CD14-positive monocyte (primary cell): ENCODE measurements at regions of chr9 and their contacts with region 1.

Region 1: DNA sequence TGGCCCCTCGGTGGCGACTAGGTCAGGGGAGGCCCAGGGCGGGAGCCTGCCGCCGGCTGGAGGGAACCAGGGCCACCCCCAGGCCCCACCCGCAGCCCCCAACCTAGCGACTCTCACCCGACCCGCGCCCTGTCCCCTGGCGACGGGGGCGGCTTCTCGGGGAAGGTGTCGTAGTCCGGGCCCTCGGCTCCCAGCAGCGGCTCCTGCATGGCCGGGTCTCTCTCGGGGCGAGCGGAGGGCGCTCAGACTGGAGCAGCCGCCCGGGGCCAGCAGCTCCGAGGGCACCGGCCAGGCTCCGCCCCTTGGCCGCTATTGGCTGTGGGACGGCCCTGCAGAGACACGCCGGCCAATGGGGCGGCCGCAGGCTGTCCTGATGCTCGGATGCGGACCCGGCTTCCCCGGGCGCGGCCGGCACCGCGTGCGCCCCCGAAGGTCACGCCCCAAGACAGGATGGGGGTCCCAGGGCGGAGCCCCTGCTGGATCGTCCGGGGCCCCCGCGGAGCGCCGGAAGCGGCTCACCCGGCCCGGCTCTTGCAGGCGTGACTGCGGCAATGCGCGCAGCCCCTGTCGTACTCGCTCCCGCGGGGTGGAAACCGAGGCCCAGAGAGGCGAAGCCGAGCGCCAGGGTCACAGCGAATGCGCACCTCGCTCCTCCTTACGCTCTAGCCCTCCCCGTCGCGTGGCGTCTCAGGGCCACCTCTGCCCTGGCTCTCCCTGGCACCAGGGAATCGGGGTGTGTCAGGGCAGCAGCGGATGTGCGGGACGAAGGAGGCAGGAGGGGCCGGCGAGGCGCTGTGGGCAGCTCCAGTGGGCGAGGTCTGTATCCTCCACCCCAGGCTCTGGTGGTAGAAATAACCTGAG is at the start of gene SLC2A6:
- DNase-seq: peak; percentile 70 to 87 (median 86)
- H3K4me3 ChIP-seq: peak within 1 kb of the TSS; percentile 74 to 95 (median 90)
- H3K4me3 Mint-ChIP-seq: peak within 1 kb of the TSS; percentile 84 to 92
- H3K27ac ChIP-seq: peak within 1 kb of the TSS; percentile 90 to 93
- H3K27ac Mint-ChIP-seq: peak within 1 kb of the TSS; percentile 78 to 99 (median 95)
- H3K4me1 ChIP-seq: peaks cover 52 to 57% of the 10 kb centered on the region in 2 donors
- H3K4me1 Mint-ChIP-seq: peaks cover 44% of the 10 kb centered on the region
- H3K27me3 ChIP-seq: peaks cover 0 to 15% of the 10 kb centered on the region in 2 donors
- H3K27me3 Mint-ChIP-seq: peaks cover 27 to 40% (median 33%) of the 10 kb centered on the region in 3 donors
- CTCF ChIP-seq: no peak
- polyA plus RNA-seq, gene SLC2A6: 43.2 to 127 (median 60.4) TPM

Region 2: DNA sequence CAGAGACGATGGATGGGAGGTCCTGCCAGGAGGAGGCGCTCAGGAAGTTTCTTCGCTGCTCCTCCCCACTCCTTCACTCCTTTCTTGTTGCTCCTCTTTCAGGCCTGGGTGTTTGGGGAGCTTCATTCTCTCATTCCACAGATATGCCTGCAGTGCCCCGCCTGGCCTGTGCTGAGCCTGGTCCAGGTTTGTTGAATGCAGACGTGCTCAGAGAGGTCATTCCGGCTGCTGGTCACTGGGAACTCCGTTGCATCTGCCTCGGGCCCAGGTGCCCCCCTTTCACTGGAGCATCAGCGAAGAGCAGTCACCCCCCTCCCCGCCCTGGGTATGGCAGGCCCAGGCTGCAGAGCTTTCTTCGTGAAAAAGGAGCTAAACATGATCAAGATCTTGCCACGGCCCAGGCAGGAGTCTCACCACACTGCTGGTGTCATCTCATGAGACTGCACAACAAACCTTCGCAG is 158.6 kb before region 1 on chr9:
- intact Hi-C with region 1: no loop called
- DNase-seq: no peak
- H3K4me3 ChIP-seq: no peak overlapping the region
- H3K4me3 Mint-ChIP-seq: no peak overlapping the region
- H3K27ac ChIP-seq: no peak overlapping the region
- H3K27ac Mint-ChIP-seq: peak overlapping the region in 2 of 7 donors; percentile 5 to 43
- H3K4me1 ChIP-seq: no peaks in the 10 kb centered on the region
- H3K4me1 Mint-ChIP-seq: peaks cover 5% of the 10 kb centered on the region
- H3K27me3 ChIP-seq: no peaks in the 10 kb centered on the region
- H3K27me3 Mint-ChIP-seq: peaks cover 5 to 18% (median 7%) of the 10 kb centered on the region in 3 donors
- CTCF ChIP-seq: no peak

Region 3: DNA sequence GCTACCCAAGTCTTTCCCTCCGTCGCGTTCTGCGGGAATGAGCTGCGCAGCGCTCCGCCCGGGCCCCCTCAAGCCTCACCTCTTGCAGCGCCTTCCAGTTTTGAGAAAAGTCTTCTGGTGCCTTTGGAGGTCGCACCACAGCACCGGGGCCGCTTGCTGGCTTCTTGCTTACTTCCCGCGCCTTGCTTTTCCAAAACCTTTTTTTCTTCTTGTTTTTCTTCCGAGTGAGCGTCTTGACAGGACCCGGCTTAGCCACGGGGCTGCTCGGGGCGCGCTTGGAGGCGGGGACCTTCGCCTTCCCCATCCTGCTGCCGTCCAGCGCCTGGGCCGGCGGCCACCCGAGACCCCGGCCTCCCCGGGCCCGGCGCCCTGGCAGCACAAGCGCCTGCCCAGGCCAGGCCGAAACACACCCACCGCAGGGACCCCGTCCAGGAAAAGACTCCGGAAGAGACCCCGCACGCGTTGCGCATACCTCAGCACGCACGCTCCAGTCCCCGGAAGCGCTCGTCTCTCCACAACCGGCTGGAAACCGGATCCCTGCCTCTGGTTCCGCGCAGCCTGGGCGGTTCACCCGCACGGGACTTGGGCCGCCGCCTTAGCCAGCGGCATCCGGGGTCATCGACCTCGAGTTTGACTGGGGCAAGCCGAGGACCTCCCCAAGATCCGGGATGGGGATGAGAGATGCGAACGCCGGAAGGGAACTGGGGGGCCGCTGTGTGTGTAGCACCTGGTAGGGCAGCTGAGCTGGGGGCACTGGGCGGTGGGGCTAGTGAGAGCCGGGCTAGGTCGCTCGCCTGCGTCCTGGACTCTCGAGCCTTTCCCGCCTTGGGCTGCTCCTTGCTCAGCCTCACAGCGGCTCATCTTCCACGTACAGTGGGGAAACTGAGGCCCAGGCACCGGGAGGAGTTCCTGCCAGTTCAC is 61.3 kb before region 1 on chr9 and contains the start of gene REXO4:
- intact Hi-C with region 1: loop called in 1 of 2 experiments (anchors 5 kb)
- DNase-seq: peak; percentile 75 to 78 (median 77)
- H3K4me3 ChIP-seq: peak within 1 kb of the TSS; percentile 58 to 94 (median 83)
- H3K4me3 Mint-ChIP-seq: peak within 1 kb of the TSS; percentile 92 to 96
- H3K27ac ChIP-seq: peak within 1 kb of the TSS; percentile 75 to 82
- H3K27ac Mint-ChIP-seq: peak within 1 kb of the TSS; percentile 73 to 93 (median 86)
- H3K4me1 ChIP-seq: peaks cover 21 to 26% of the 10 kb centered on the region in 2 donors
- H3K4me1 Mint-ChIP-seq: peaks cover 34% of the 10 kb centered on the region
- H3K27me3 ChIP-seq: no peaks in the 10 kb centered on the region
- H3K27me3 Mint-ChIP-seq: peaks cover 0 to 4% (median 1%) of the 10 kb centered on the region in 3 donors
- CTCF ChIP-seq: no peak
- polyA plus RNA-seq, gene REXO4: 3.0 to 11.0 (median 4.2) TPM

Region 4: GRCh38 chr9:133514460-133515238 is 35.6 kb after region 1 on chr9:
- intact Hi-C with region 1: no loop called
- DNase-seq: no peak
- H3K4me3 ChIP-seq: no peak overlapping the region
- H3K4me3 Mint-ChIP-seq: no peak overlapping the region
- H3K27ac ChIP-seq: no peak overlapping the region
- H3K27ac Mint-ChIP-seq: peak overlapping the region in 1 of 7 donors; percentile 69
- H3K4me1 ChIP-seq: no peaks in the 10 kb centered on the region
- H3K4me1 Mint-ChIP-seq: no peaks in the 10 kb centered on the region
- H3K27me3 ChIP-seq: peaks cover 0 to 2% of the 10 kb centered on the region in 2 donors
- H3K27me3 Mint-ChIP-seq: peaks cover 4 to 7% (median 4%) of the 10 kb centered on the region in 3 donors
- CTCF ChIP-seq: no peak

Region 5: GRCh38 chr9:134024828-134025605 is 545.9 kb after region 1 on chr9 and contains the start of gene BRD3OS:
- intact Hi-C with region 1: loop called in 1 of 2 experiments (anchors 10 kb)
- DNase-seq: peak; percentile 95 to 99 (median 99)
- H3K4me3 ChIP-seq: peak within 1 kb of the TSS; percentile 63 to 80 (median 70)
- H3K4me3 Mint-ChIP-seq: peak within 1 kb of the TSS; percentile 77 to 88
- H3K27ac ChIP-seq: no peak within 1 kb of the TSS
- H3K27ac Mint-ChIP-seq: peak within 1 kb of the TSS in 5 of 7 donors; percentile 24 to 89 (median 50)
- H3K4me1 ChIP-seq: peaks cover 12 to 13% of the 10 kb centered on the region in 2 donors
- H3K4me1 Mint-ChIP-seq: peaks cover 13% of the 10 kb centered on the region
- H3K27me3 ChIP-seq: no peaks in the 10 kb centered on the region
- H3K27me3 Mint-ChIP-seq: peaks cover 0 to 3% (median 1%) of the 10 kb centered on the region in 3 donors
- CTCF ChIP-seq: no peak
- polyA plus RNA-seq, gene BRD3OS: 2.9 to 6.8 (median 6.6) TPM